ENCODE measurements at regions of chr1 and their contacts with region 1.

Region 1: DNA sequence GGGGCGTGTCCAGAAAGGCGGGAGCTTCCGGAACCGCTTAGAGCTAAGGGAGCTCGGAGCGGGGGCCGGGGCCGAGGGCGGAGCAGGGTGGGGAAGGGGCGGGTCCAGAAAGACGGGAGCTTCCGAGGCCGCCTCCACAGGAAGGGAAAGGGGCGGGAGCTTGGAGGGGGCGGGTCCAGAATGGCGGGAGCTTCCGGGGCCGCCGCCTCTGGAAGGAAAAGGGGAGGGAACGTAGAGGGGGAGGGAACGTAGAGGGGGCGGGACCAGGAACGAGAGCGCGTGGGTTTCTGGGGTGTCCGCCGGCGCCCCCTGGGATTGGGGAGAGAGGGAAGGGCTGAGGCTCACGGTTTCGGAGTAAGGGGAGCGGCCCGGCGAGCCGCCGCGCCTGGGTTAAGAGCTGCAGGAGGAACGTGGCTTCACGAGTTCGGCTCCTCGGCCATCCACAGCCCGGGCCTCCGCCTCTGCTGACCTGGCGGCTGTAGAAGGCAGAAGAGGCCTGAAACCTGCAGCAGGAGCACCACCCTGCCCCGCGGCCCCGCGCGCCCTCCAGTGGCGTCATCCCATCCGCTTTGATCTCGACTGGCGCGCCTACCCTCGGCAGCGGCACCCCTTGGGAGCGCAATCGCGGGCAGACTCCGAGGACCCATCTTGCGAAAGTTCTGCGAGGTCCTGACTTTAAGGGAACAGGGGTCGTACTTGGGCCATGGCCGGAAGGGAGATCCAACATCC is 22.9 kb upstream of the HPDL start:
- DNase-seq: peak; percentile 99 to 100
- ATAC-seq: peak; percentile 97
- H3K4me3 ChIP-seq: peak overlapping the region; percentile 33 to 62
- H3K27ac ChIP-seq: peak overlapping the region in 1 of 2 donors; percentile 69
- H3K4me1 ChIP-seq: no peaks in the 10 kb centered on the region
- H3K27me3 ChIP-seq: no peaks in the 10 kb centered on the region

Region 2: DNA sequence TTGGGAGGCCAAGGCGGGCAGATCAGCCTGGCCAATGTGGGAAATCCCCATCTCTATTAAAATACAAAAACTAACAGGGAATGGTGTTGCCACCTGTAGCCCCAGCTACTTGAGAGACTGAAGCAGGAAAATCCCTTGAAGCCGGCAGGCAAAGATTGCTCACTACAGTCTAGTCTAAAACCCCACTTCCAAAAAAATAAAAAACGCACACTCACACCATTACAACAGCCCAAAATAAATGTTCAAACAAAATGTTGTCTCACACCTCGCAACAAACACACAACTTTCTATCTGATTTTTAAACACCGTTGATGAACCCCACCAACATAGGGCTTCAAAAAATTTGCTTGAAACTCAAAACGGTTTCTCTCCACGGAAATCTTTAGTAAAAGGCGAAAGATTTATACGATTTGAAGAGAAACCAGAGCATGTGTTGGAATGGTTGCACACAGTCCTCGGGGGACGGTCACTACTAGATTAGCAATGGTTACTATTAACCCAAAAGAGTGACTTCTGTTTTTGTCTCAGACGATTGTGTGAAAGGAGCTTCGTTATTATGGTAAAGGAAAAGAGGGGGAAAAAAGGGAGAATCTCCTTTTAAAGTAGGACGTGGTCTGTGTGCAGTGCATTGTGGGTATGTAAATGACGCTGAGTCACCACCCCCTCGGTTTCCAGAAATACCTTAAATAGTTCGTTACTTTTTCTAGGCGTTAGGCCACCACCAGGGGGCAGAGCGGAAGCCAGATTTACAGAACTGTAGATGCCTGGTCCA is 572.8 kb before region 1 on chr1 and contains the start of gene RNU5D-1:
- intact Hi-C with region 1: loop called in 1 of 2 experiments (anchors 5 kb)
- DNase-seq: peak; percentile 96 to 98
- ATAC-seq: peak; percentile 94
- H3K4me3 ChIP-seq: no peak within 1 kb of the TSS
- H3K27ac ChIP-seq: peak within 1 kb of the TSS; percentile 57 to 86
- H3K4me1 ChIP-seq: no peaks in the 10 kb centered on the region
- H3K27me3 ChIP-seq: no peaks in the 10 kb centered on the region
- total RNA-seq, gene RNU5D-1: not detected

Region 3: DNA sequence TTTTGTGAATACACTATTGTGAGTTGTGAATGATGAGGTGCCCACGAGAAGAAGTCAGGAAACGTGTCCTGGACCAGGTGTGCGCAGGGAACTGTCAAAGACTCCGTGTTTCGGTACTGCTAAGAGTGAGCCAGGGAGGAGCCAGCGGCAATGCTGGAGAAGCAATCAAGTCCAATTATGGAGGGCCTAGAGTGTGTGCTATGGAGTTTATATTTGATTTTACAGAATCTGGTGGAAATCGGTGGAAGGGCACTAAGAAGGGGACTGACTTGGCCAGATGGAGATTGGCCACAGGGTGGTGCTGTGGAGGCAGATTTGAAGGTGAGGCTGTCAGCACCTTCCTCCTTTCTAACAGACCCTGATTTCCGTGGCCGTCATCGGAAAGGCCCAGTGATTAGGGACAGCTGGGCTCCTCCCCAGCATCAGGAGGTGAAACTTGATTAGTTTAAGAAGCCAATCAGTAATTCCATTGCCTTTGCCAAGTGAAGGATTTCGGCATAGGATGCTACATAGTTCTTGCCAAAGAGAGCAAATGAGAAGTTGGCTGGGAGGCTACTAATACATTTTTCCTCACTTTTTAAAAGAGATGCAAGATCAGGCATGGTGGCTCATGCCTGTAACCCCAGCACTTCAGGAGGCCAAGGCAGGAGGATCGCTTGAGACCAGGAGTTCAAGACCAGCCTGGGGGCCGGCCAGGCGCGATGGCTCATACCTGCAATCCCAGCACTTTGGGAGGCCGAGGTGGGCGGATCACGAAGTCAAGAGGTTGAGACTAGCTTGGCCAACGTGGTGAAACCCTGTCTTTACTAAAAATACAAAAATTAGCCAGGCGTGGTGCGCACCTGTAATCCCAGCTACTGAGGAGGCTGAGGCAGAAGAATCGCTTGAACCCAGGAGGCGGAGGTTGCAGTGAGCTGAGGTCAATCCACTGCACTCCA is 467.7 kb before region 1 on chr1:
- intact Hi-C with region 1: loop called (anchors 5 to 10 kb)
- DNase-seq: peak; percentile 93 to 96
- ATAC-seq: peak; percentile 86
- H3K4me3 ChIP-seq: no peak overlapping the region
- H3K27ac ChIP-seq: no peak overlapping the region
- H3K4me1 ChIP-seq: no peaks in the 10 kb centered on the region
- H3K27me3 ChIP-seq: no peaks in the 10 kb centered on the region

Region 4: GRCh38 chr1:45011837-45012638 is 291.7 kb before region 1 on chr1 and contains the start of gene UROD:
- intact Hi-C with region 1: loop called (anchors 1 to 2 kb)
- DNase-seq: peak; percentile 96
- ATAC-seq: peak; percentile 95
- H3K4me3 ChIP-seq: peak within 1 kb of the TSS; percentile 74 to 89
- H3K27ac ChIP-seq: peak within 1 kb of the TSS in 1 of 2 donors; percentile 60
- H3K4me1 ChIP-seq: no peaks in the 10 kb centered on the region
- H3K27me3 ChIP-seq: no peaks in the 10 kb centered on the region
- total RNA-seq, gene UROD: 54.6 to 76.2 TPM

Region 5: DNA sequence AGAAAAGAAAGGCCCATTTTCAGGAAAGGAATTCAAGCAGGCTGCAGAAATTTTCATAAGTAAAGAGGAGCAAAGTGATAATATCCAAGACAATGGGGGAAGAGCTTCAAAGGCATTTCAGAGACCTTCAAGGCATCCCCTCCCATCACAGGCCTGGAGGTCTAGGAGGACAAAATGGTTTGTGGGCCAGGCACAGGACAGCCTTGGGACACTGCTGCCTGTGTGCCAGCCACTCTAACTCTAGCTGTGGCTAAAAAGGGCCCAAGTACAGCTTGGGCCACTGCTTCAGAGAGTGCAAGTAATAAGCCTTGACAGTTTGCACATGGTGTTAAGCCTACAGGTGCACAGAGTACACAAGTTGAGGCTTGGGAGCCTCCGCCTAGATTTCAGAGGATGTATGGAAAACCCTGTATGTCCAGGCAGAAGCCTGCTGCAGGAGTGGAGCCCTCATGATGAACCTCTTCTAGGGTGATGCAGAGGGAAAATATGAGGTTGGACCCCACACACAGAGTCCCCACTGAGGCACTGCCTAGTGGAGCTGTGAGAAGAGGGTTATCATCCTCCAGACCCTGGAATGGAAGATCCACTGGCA is 45.6 kb before region 1 on chr1:
- intact Hi-C with region 1: no loop called
- DNase-seq: no peak
- ATAC-seq: no peak
- H3K4me3 ChIP-seq: no peak overlapping the region
- H3K27ac ChIP-seq: no peak overlapping the region
- H3K4me1 ChIP-seq: no peaks in the 10 kb centered on the region
- H3K27me3 ChIP-seq: no peaks in the 10 kb centered on the region

Region 6: GRCh38 chr1:45339789-45340570 is 36.2 kb after region 1 on chr1 and contains the starts of genes MUTYH and TOE1:
- intact Hi-C with region 1: loop called in 1 of 2 experiments (anchors 1 kb)
- DNase-seq: peak; percentile 96 to 98
- ATAC-seq: peak; percentile 97
- H3K4me3 ChIP-seq: peak within 1 kb of the TSS; percentile 60 to 64
- H3K27ac ChIP-seq: peak within 1 kb of the TSS; percentile 49 to 91
- H3K4me1 ChIP-seq: no peaks in the 10 kb centered on the region
- H3K27me3 ChIP-seq: no peaks in the 10 kb centered on the region
- total RNA-seq, gene MUTYH: 19.8 to 28.8 TPM
- total RNA-seq, gene TOE1: 6.9 to 10.6 TPM

Measured in aorta (tissue), 5 donors.